Heart left ventricle (tissue), 16 donors: ENCODE measurements at regions of chr19 and their contacts with region 1.

Region 1: DNA sequence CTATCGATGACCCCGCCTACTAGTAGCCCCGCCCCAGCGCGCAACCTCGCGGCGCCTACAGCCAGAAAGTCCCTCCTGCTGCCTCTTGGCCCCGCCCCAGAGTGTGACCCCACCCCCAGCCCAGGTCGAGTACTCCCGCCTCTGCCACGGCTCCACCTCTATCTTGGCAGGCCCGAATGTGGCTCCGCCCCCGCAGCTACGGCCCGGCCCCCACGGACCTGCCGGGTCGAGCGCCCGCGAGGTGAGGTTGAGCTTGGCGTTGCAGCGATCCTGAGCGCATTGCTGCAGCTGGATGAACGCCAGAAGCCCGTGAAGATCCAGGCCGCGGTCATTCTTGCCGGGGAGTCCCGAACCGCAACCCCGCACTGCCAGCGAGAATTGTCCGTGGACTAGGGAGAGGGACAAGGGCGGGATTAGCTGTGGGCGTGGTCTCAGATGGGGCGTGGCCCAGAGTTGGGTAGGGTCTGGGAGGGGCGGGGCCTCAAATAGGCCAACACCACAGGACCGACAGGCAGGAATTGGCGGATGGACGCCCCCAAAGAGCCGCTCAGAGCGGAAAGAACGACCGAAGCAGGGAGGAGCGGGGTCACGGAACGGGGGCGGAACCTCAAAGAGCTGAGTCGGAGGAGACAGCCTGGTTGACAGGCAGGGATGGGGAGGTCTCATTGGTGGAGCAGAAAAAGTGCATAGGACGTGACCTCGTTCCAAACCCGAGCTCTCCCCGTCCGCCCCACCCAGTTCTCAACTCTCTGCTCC is 1.8 kb downstream of the LYPD3 start:
- DNase-seq: peak; percentile 96 to 98 (median 97)
- ATAC-seq: peak; percentile 94 to 96 (median 95)
- H3K4me3 ChIP-seq: peak overlapping the region; percentile 34 to 83 (median 68)
- H3K27ac ChIP-seq: peak overlapping the region in 11 of 12 donors; percentile 71 to 92 (median 80)
- H3K4me1 ChIP-seq: peaks cover 0 to 21% (median 9%) of the 10 kb centered on the region in 12 donors
- H3K27me3 ChIP-seq: peaks cover 0 to 6% (median 0%) of the 10 kb centered on the region in 9 donors
- CTCF ChIP-seq: no peak
- POLR2A ChIP-seq: no peak

Region 2: DNA sequence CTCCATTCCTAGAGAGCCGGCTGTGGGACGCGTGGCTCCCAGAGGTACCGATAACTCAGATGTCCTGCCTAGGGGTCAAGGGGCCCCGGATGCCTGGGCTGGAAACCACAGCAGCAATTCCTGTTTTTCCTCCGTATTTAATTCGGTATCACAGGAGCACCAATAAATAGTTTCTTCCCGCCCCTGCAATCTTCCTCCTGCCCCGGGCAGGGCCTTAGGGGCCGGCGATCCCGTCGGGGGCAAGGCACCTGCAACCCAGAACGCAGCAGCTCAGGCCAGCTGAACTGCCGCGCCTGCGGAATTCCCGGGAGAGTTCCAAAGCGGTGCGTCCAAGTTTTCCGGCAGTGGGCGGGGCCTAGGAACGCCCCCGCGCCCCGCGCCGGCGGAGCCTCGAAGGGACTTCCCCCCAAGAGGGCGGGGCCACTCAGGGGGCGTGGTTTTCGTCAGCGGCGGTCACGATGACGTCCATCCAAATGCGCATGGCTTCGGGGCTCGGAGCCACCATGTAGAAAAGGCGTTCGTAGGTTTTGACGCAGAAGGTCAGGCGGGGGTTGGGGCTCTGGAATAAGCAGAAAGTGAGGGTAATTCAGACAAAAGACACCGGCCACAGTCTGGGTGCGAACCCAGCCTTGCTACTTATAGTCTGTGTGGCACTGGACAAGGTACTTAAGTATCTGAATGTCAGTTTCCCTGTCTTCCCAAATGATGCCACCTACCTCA is 11.6 kb after region 1 on chr19:
- intact Hi-C with region 1: loop called in 1 of 10 experiments (anchors 1 kb)
- DNase-seq: peak; percentile 95 to 97 (median 96)
- ATAC-seq: peak; percentile 95 to 98 (median 96)
- H3K4me3 ChIP-seq: peak overlapping the region in 10 of 12 donors; percentile 31 to 58 (median 50)
- H3K27ac ChIP-seq: peak overlapping the region in 11 of 12 donors; percentile 52 to 89 (median 77)
- H3K4me1 ChIP-seq: peaks cover 0 to 19% (median 11%) of the 10 kb centered on the region in 12 donors
- H3K27me3 ChIP-seq: no peaks in the 10 kb centered on the region
- CTCF ChIP-seq: no peak
- POLR2A ChIP-seq: peak in 1 of 2 donors; percentile 59

Region 3: DNA sequence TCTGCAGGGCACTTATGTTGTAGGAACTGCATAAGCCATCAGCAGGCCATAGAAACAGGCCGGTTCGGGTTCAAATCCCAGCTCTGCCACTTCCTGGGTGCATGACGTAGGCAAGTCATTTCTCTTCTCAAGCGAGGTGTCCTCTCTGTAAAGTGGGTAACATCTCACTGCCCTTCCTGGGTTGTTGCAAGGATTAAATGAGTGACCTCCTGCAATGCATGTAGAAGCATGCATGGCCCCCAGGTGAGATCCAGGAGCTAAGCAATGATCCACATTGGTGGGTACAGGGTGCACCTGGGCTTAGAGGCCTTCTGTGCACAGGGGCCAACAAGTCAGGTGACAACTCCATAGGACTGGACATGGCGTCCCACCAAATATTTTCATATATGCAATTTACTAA is 27.2 kb after region 1 on chr19:
- intact Hi-C with region 1: no loop called
- DNase-seq: no peak
- ATAC-seq: no peak
- H3K4me3 ChIP-seq: no peak overlapping the region
- H3K27ac ChIP-seq: no peak overlapping the region
- H3K4me1 ChIP-seq: no peaks in the 10 kb centered on the region
- H3K27me3 ChIP-seq: no peaks in the 10 kb centered on the region
- CTCF ChIP-seq: no peak
- POLR2A ChIP-seq: no peak

Region 4: DNA sequence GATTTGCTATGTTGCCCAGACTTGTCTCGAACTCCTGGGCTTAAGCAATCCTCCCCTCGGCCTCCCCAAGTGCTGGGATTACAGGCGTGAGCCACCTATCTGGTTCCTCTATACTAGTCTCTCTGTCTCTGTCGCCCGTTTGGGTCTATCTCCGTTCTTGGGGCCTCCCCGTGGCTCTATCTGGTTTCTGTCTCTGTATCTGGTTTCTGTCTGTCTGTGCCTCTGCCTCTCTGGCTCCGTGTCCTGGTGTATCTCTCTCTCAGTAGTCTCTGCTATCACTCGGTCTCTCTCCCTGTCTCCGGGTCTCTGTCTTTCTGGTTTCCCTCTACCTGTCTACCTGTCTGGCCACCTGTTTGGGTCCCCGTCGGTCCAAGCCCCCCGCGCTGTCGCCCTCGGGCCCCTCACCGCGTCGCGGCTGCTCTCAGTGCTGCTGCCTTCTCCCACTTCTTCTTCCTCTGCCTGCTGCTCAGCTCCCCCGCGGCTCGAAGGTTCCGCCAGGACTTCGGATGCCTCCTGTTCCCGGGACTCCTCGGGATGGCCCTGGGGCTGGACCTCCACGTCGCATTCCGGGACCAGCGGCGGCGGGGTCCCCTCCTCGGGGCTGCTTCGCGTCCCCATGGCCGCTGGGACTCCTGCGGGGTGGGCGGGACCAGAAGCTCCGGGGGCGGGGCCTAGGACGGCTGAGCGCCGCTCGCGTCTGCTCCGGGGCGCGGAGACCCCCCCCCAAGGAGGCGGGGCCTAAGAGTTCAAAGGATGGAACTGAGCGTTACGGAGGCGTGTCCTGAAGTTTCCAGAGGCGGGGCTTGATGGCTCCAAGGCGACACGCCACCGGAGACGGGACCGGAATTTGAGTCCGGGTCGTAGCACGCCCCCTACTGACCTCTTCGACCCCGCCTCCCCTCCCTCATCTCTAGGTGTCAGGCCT is 40.2 kb after region 1 on chr19:
- intact Hi-C with region 1: loop called in 8 of 10 experiments (anchors 2 to 5 kb)
- DNase-seq: peak; percentile 97 to 99 (median 98)
- ATAC-seq: peak; percentile 98 to 99 (median 99)
- H3K4me3 ChIP-seq: peak overlapping the region; percentile 45 to 95 (median 78)
- H3K27ac ChIP-seq: peak overlapping the region; percentile 42 to 97 (median 89)
- H3K4me1 ChIP-seq: peaks cover 0 to 29% (median 14%) of the 10 kb centered on the region in 12 donors
- H3K27me3 ChIP-seq: no peaks in the 10 kb centered on the region
- CTCF ChIP-seq: peak in 7 of 12 donors; percentile 14 to 53 (median 33)
- POLR2A ChIP-seq: peak in 1 of 2 donors; percentile 38

Region 5: GRCh38 chr19:43519436-43520088 is 56.0 kb after region 1 on chr19:
- intact Hi-C with region 1: loop called in 1 of 10 experiments (anchors 5 kb)
- DNase-seq: peak; percentile 59 to 82 (median 74)
- ATAC-seq: peak in 3 of 4 donors; percentile 69 to 71 (median 69)
- H3K4me3 ChIP-seq: no peak overlapping the region
- H3K27ac ChIP-seq: no peak overlapping the region
- H3K4me1 ChIP-seq: peaks cover 0 to 14% (median 0%) of the 10 kb centered on the region in 12 donors
- H3K27me3 ChIP-seq: no peaks in the 10 kb centered on the region
- CTCF ChIP-seq: peak; percentile 82 to 96 (median 90)
- POLR2A ChIP-seq: no peak